Right cardiac atrium (tissue), 5 donors: ENCODE measurements at regions of chr21 and their contacts with region 1.

Region 1: DNA sequence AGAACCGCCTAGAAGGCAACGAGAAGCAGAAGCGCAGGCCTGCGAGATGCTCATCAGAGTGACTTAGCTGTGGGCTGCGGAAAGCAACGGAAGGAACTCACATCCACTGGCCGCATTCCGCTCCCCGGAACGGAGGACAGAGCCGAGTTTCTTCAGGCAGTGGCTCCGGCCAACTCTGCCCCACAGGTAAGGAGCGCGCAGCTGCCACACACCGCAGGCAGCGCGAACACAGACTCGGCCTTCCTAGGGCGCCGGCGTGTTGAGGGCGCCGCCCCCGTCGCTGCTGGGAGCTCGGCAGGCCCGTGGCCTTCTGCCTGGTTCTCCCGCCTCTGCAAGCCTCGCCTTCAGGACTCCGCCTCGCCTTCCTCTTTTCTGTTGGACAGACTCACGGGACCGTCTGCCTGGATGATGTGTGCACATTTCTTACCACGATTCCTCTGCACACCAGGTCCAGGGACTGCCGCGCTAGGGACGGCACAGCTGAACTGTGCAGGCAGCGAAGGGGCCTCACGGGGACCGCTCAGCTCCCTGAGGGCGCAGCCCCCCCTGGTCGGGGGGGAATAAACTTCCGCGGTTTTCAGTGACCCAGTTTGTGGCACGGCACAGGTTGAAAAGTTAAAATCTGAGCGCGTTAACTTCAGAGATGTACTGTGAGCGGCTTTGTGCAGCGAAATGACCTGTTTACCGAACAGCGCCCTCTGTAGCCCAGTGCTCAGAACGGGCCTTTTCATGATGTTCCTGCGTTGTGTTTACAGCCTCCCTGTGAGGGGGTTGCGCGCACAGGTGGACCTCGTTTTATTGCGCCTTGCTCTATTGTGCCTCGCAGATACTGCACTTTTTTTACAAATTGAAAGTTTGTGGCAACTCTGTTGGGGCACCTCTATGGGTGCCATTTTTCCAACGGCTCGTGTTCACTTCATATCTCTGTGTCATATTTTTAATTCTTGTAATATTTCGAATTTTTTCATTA is 15.8 kb downstream of the TCP10L start:
- DNase-seq: peak; percentile 75 to 91 (median 84)
- ATAC-seq: peak; percentile 93 to 95
- H3K4me3 ChIP-seq: peak overlapping the region; percentile 38
- H3K27ac ChIP-seq: peak overlapping the region; percentile 22
- H3K4me1 ChIP-seq: no peaks in the 10 kb centered on the region
- H3K27me3 ChIP-seq: no peaks in the 10 kb centered on the region

Region 2: GRCh38 chr21:32143241-32143939 is 426.2 kb before region 1 on chr21:
- intact Hi-C with region 1: no loop called
- DNase-seq: peak; percentile 38 to 85 (median 74)
- ATAC-seq: peak; percentile 60 to 92
- H3K4me3 ChIP-seq: no peak overlapping the region
- H3K27ac ChIP-seq: no peak overlapping the region
- H3K4me1 ChIP-seq: no peaks in the 10 kb centered on the region
- H3K27me3 ChIP-seq: no peaks in the 10 kb centered on the region

Region 3: GRCh38 chr21:32403201-32403777 is 166.3 kb before region 1 on chr21:
- intact Hi-C with region 1: loop called in 3 of 4 experiments (anchors 5 to 10 kb)
- DNase-seq: peak; percentile 70 to 84 (median 77)
- ATAC-seq: peak; percentile 86 to 87
- H3K4me3 ChIP-seq: no peak overlapping the region
- H3K27ac ChIP-seq: no peak overlapping the region
- H3K4me1 ChIP-seq: no peaks in the 10 kb centered on the region
- H3K27me3 ChIP-seq: no peaks in the 10 kb centered on the region

Region 4: DNA sequence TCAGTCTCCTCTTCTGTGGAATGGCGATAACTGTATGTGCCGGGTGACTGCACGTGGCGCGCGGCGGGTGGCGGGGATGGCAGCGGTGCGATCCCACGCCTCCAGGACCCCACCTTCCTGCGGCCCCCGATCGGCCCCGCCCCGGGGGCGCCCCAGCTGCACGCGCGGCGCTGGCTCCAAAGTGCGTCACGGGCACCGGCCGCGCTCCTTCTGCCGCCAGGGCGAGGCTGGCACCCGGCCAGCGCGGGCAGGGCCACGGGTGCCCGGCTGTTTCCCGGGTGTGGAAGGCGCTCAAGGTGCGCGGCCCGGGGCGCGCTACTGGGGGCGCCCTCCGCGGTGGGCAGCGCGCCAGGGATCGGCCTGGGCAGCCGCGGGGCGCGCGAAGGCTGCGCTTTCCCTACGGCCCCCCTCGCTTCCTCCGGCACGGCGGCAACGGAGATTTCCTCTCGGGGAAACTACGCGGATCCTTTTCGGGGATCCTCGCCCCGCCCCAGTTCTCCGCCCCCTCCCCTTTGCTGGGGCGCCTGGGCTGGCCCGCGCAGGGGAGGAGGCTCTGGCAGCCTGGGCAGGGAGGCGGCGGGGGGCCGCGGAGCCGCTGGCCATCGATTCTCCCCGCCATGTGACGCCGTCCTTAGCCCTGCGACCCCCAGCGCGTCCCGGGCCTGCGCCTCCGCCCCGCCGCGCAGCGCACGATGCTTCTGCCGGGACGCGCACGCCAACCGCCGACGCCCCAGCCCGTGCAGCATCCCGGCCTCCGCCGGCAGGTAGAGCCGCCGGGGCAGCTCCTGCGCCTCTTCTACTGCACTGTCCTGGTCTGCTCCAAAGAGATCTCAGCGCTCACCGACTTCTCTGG is 157.2 kb before region 1 on chr21 and contains the start of gene EVA1C:
- intact Hi-C with region 1: loop called in 2 of 4 experiments (anchors 5 to 10 kb)
- DNase-seq: peak; percentile 84 to 93 (median 91)
- ATAC-seq: peak; percentile 66 to 77
- H3K4me3 ChIP-seq: peak within 1 kb of the TSS; percentile 79
- H3K27ac ChIP-seq: peak within 1 kb of the TSS; percentile 99
- H3K4me1 ChIP-seq: peaks cover 15% of the 10 kb centered on the region
- H3K27me3 ChIP-seq: no peaks in the 10 kb centered on the region
- total RNA-seq, gene EVA1C: 18.0 to 39.8 (median 23.5) TPM

Region 5: GRCh38 chr21:32463889-32464300 is 105.7 kb before region 1 on chr21:
- intact Hi-C with region 1: loop called in 1 of 4 experiments (anchors 10 kb)
- DNase-seq: no peak
- ATAC-seq: peak; percentile 85 to 89
- H3K4me3 ChIP-seq: no peak overlapping the region
- H3K27ac ChIP-seq: peak overlapping the region; percentile 76
- H3K4me1 ChIP-seq: no peaks in the 10 kb centered on the region
- H3K27me3 ChIP-seq: no peaks in the 10 kb centered on the region